WTC11 (cell line): ENCODE measurements at regions of chr20 and their contacts with region 1.

Region 1: DNA sequence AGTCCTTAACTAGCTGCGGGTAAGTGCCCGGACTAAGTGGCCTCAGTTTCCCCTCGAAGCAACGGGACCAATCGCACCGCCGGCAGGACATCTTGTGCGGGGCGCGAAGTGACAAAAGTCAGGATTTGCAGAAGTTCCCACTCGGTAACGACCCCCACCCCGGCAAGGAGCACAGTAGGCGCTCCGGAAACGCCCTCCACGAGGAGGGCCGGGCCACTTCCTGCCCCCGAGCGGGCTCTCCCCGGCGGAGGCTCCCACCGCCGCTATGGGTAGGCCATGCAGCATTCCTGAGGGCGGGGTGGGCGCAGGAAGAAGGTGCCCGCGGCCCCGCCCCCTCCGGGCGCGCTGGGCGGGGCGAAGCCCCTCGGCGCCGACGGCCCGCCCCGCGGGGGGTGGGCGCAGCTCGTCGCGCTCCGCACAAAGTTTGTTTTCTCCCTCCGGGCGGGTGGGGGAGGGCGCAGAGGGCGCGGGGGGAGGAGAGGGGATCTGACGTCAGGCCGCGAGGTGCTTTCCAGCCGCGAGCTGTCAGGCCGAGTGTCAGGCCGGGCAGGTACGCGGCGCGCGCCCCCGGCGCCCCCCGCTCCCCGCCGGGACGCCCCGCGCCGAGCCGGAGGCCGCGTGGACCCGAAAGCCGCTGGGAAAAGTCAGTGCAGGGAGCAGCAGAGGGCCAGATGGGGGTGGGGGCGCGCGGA is at the start of gene TGIF2:
- DNase-seq: peak; percentile 94
- ATAC-seq: peak; percentile 67
- H3K4me3 Mint-ChIP-seq: peak within 1 kb of the TSS; percentile 86
- H3K27ac Mint-ChIP-seq: peak within 1 kb of the TSS; percentile 99
- H3K4me1 Mint-ChIP-seq: peaks cover 59% of the 10 kb centered on the region
- H3K27me3 Mint-ChIP-seq: no peaks in the 10 kb centered on the region
- CTCF ChIP-seq: no peak
- total RNA-seq, gene TGIF2: 71.1 to 88.9 TPM (median 80.3 TPM) in 3 replicates

Region 2: DNA sequence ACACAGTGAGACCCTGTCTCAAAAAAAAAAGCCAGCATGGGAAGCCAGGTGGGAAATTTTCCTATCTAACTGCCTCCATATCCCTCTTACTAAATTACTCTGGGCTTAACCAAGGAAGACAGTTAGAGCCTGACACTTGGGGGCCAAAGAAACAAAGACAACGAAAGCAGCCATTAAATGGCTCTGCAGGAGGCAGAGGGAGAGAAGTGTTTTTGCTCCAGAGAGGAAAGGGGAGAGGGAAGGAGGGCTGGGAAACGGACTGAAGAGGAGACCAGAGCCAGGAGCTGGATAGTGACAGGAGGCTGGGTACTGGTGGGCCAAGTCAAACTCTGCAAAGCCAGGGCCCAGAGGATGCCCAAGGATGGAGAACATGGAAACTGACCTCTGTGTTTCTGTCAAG is 10.5 kb before region 1 on chr20:
- CTCF ChIA-PET with region 1: interaction called, 11 read pairs
- POLR2A ChIA-PET with region 1: interaction called, 10 read pairs
- DNase-seq: no peak
- ATAC-seq: peak; percentile 78
- H3K4me3 Mint-ChIP-seq: no peak overlapping the region
- H3K27ac Mint-ChIP-seq: peak overlapping the region; percentile 93
- H3K4me1 Mint-ChIP-seq: peaks cover 25% of the 10 kb centered on the region
- H3K27me3 Mint-ChIP-seq: peaks cover 4% of the 10 kb centered on the region
- CTCF ChIP-seq: no peak

Region 3: GRCh38 chr20:36585463-36586108 is 12.3 kb after region 1 on chr20:
- CTCF ChIA-PET with region 1: interaction called, 32 read pairs
- POLR2A ChIA-PET with region 1: interaction called, 54 read pairs
- DNase-seq: peak; percentile 63
- ATAC-seq: peak; percentile 88
- H3K4me3 Mint-ChIP-seq: peak overlapping the region; percentile 46
- H3K27ac Mint-ChIP-seq: peak overlapping the region; percentile 97
- H3K4me1 Mint-ChIP-seq: peaks cover 51% of the 10 kb centered on the region
- H3K27me3 Mint-ChIP-seq: no peaks in the 10 kb centered on the region
- CTCF ChIP-seq: no peak

Region 4: GRCh38 chr20:36591854-36592641 is 18.8 kb after region 1 on chr20:
- CTCF ChIA-PET with region 1: interaction called, 32 read pairs
- POLR2A ChIA-PET with region 1: interaction called, 4 read pairs
- DNase-seq: peak; percentile 45
- ATAC-seq: peak; percentile 65
- H3K4me3 Mint-ChIP-seq: no peak overlapping the region
- H3K27ac Mint-ChIP-seq: peak overlapping the region; percentile 84
- H3K4me1 Mint-ChIP-seq: peaks cover 34% of the 10 kb centered on the region
- H3K27me3 Mint-ChIP-seq: no peaks in the 10 kb centered on the region
- CTCF ChIP-seq: no peak

Region 5: DNA sequence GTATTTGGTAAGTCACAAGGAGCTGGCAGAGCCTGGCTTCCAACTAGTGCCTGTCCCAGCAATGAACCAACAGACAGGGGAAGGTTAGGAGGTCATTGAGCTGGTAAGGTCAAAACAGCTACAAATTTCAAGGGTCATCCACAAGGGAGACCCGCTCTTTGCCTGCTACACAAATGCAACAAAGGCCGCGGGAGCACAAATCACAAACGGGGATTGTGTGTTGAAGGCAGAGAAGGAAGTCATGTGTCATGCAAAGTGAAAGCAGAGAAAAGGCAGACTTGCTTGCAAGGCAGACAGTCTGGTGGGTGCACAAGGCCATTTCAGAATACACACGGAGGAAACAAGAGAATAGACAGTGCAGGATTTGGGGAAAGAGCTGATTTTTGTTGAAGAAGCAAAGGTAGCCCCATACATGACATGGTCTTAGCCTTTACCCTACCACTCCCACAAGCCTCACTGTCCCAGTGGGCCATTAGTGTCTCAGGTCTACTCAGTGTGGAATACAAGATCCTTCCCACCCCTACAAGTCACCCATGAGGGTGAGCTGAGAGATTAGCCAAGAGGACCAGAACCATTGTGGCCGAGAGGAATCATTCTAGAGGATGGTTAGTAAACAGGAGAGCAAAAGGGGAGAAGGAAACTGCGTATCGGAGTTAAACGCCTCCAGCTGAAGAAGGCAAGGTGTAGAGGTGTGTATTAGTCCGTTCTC is 396.4 kb after region 1 on chr20:
- CTCF ChIA-PET with region 1: no interaction called
- POLR2A ChIA-PET with region 1: no interaction called
- DNase-seq: no peak
- ATAC-seq: peak; percentile 52
- H3K4me3 Mint-ChIP-seq: no peak overlapping the region
- H3K27ac Mint-ChIP-seq: no peak overlapping the region
- H3K4me1 Mint-ChIP-seq: peaks cover 8% of the 10 kb centered on the region
- H3K27me3 Mint-ChIP-seq: no peaks in the 10 kb centered on the region
- CTCF ChIP-seq: no peak